ENCODE measurements at regions of chr6 and their contacts with region 1.

Region 1: DNA sequence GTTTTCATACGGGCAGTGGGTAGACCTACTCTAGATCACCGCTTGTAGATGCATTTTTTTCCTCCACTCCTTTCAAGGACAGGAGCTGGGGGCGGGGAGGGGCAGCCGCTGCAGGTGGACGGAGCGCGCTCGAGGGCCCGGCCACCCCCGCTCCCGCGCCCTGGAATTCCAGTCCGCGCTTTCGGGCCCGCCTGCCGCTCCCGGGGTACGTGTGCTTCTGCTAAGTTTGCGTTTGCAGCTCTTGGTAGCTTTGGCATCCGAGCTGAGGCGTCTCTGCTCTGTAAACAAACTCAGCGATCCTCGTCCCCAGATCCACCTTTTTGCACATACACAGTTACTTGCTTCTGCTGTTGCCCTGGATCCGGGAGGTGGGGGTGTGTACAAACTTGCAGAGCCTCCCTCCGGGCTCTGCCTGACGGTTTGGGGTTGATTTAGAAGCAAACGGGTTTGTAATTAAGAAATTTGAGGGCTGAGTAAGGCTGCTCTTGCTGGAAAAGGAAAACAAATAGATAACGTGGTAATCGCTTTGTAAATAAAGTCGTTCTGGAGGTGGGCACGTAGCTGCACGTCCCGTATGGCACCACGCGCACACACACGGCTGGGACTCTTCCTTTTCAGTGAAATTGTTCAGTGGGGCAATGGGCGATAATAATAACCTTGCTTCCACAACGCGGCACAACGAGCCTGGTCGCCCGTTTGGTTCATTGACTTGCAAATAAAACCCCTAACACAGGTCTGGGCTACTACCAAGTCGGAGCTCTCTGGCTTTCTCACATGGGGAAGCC is 976 bp upstream of the CITED2 start:
- DNase-seq: peak; percentile 71 to 93 (median 83)
- ATAC-seq: peak; percentile 63
- H3K4me3 ChIP-seq: peak overlapping the region; percentile 92 to 93
- H3K4me3 Mint-ChIP-seq: peak overlapping the region; percentile 98
- H3K27ac ChIP-seq: peak overlapping the region; percentile 76 to 94
- H3K27ac Mint-ChIP-seq: peak overlapping the region; percentile 95
- H3K4me1 ChIP-seq: peaks cover 22% of the 10 kb centered on the region
- H3K4me1 Mint-ChIP-seq: peaks cover 26% of the 10 kb centered on the region
- H3K27me3 ChIP-seq: no peaks in the 10 kb centered on the region
- H3K27me3 Mint-ChIP-seq: no peaks in the 10 kb centered on the region
- CTCF ChIP-seq: no peak

Region 2: GRCh38 chr6:138188278-138188941 is 1187.0 kb before region 1 on chr6:
- CTCF ChIA-PET with region 1: no interaction called
- POLR2A ChIA-PET with region 1: no interaction called
- intact Hi-C with region 1: no loop called
- DNase-seq: no peak
- ATAC-seq: no peak
- H3K4me3 ChIP-seq: no peak overlapping the region
- H3K4me3 Mint-ChIP-seq: no peak overlapping the region
- H3K27ac ChIP-seq: no peak overlapping the region
- H3K27ac Mint-ChIP-seq: no peak overlapping the region
- H3K4me1 ChIP-seq: no peaks in the 10 kb centered on the region
- H3K4me1 Mint-ChIP-seq: no peaks in the 10 kb centered on the region
- H3K27me3 ChIP-seq: no peaks in the 10 kb centered on the region
- H3K27me3 Mint-ChIP-seq: peaks cover 28% of the 10 kb centered on the region
- CTCF ChIP-seq: no peak

Region 3: GRCh38 chr6:138403801-138404661 is 971.4 kb before region 1 on chr6 and contains the start of gene HEBP2:
- CTCF ChIA-PET with region 1: no interaction called
- POLR2A ChIA-PET with region 1: interaction called, 7 read pairs
- intact Hi-C with region 1: loop called (anchors 2 to 5 kb)
- DNase-seq: peak; percentile 85 to 96 (median 93)
- ATAC-seq: peak; percentile 91
- H3K4me3 ChIP-seq: peak within 1 kb of the TSS; percentile 63 to 85
- H3K4me3 Mint-ChIP-seq: peak within 1 kb of the TSS; percentile 90
- H3K27ac ChIP-seq: peak within 1 kb of the TSS; percentile 63 to 85
- H3K27ac Mint-ChIP-seq: peak within 1 kb of the TSS; percentile 97
- H3K4me1 ChIP-seq: peaks cover 15% of the 10 kb centered on the region
- H3K4me1 Mint-ChIP-seq: peaks cover 23% of the 10 kb centered on the region
- H3K27me3 ChIP-seq: no peaks in the 10 kb centered on the region
- H3K27me3 Mint-ChIP-seq: no peaks in the 10 kb centered on the region
- CTCF ChIP-seq: peak; percentile 23
- total RNA-seq, gene HEBP2: 64.6 to 69.1 TPM

Region 4: DNA sequence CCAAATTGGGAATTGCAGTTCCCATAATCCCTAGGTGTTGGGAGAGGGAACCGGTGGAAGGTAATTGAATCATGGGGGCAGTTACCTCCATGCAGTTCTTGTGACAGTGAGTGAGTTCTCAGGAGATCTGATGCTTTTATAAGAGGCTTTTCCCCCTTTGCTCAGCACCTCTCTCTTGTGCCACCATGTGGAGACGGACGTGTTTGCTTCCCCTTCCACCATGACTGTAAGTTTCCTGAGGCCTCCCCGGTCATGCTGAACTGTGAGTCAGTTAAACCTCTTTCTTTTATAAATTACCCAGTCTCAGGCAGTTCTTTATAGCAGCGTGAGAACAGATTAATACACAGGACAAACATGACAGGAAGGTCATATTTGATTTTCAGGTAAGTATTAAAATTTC is 265.9 kb before region 1 on chr6:
- CTCF ChIA-PET with region 1: interaction called, 3 read pairs
- POLR2A ChIA-PET with region 1: interaction called, 42 read pairs
- intact Hi-C with region 1: loop called in 1 of 2 experiments (anchors 5 kb)
- DNase-seq: peak in 3 of 9 experiments; percentile 39 to 50 (median 42)
- ATAC-seq: no peak
- H3K4me3 ChIP-seq: no peak overlapping the region
- H3K4me3 Mint-ChIP-seq: no peak overlapping the region
- H3K27ac ChIP-seq: no peak overlapping the region
- H3K27ac Mint-ChIP-seq: peak overlapping the region; percentile 64
- H3K4me1 ChIP-seq: peaks cover 52% of the 10 kb centered on the region
- H3K4me1 Mint-ChIP-seq: peaks cover 73% of the 10 kb centered on the region
- H3K27me3 ChIP-seq: no peaks in the 10 kb centered on the region
- H3K27me3 Mint-ChIP-seq: no peaks in the 10 kb centered on the region
- CTCF ChIP-seq: peak; percentile 28

Region 5: GRCh38 chr6:139219271-139219729 is 156.1 kb before region 1 on chr6:
- CTCF ChIA-PET with region 1: interaction called, 62 read pairs
- POLR2A ChIA-PET with region 1: interaction called, 25 read pairs
- intact Hi-C with region 1: no loop called
- DNase-seq: peak; percentile 40 to 84 (median 73)
- ATAC-seq: peak; percentile 96
- H3K4me3 ChIP-seq: no peak overlapping the region
- H3K4me3 Mint-ChIP-seq: no peak overlapping the region
- H3K27ac ChIP-seq: no peak overlapping the region
- H3K27ac Mint-ChIP-seq: peak overlapping the region; percentile 82
- H3K4me1 ChIP-seq: peaks cover 11% of the 10 kb centered on the region
- H3K4me1 Mint-ChIP-seq: peaks cover 13% of the 10 kb centered on the region
- H3K27me3 ChIP-seq: no peaks in the 10 kb centered on the region
- H3K27me3 Mint-ChIP-seq: no peaks in the 10 kb centered on the region
- CTCF ChIP-seq: peak; percentile 66

Region 6: DNA sequence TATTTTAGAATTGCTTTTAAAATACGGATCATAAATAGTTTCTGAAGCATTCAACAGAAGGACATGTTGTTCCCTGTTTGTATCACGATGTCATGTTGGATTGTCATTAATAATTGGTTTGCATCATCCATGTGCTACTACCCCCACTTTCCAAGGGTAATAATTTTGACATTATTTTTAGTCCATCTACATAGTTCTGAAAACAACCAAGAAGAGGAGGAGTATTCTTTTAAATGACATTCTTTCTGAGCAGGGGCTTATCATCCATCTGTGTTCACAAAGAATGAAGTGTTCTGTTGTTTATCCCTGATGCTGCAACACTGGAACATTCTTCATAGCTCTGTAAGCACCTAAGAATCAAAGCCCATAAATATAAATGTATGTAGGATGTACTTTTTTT is 150.0 kb after region 1 on chr6:
- CTCF ChIA-PET with region 1: no interaction called
- POLR2A ChIA-PET with region 1: interaction called, 17 read pairs
- intact Hi-C with region 1: loop called (anchors 5 kb)
- DNase-seq: no peak
- ATAC-seq: no peak
- H3K4me3 ChIP-seq: no peak overlapping the region
- H3K4me3 Mint-ChIP-seq: no peak overlapping the region
- H3K27ac ChIP-seq: no peak overlapping the region
- H3K27ac Mint-ChIP-seq: no peak overlapping the region
- H3K4me1 ChIP-seq: no peaks in the 10 kb centered on the region
- H3K4me1 Mint-ChIP-seq: peaks cover 3% of the 10 kb centered on the region
- H3K27me3 ChIP-seq: no peaks in the 10 kb centered on the region
- H3K27me3 Mint-ChIP-seq: peaks cover 3% of the 10 kb centered on the region
- CTCF ChIP-seq: no peak

Region 7: GRCh38 chr6:139881728-139882211 is 506.3 kb after region 1 on chr6:
- CTCF ChIA-PET with region 1: interaction called, 3 read pairs
- POLR2A ChIA-PET with region 1: interaction called, 3 read pairs
- intact Hi-C with region 1: loop called in 1 of 2 experiments (anchors 5 kb)
- DNase-seq: peak in 2 of 9 experiments; percentile 28 to 39
- ATAC-seq: no peak
- H3K4me3 ChIP-seq: no peak overlapping the region
- H3K4me3 Mint-ChIP-seq: no peak overlapping the region
- H3K27ac ChIP-seq: no peak overlapping the region
- H3K27ac Mint-ChIP-seq: no peak overlapping the region
- H3K4me1 ChIP-seq: no peaks in the 10 kb centered on the region
- H3K4me1 Mint-ChIP-seq: no peaks in the 10 kb centered on the region
- H3K27me3 ChIP-seq: no peaks in the 10 kb centered on the region
- H3K27me3 Mint-ChIP-seq: peaks cover 2% of the 10 kb centered on the region
- CTCF ChIP-seq: peak; percentile 39